ENCODE measurements at regions of chr4 and their contacts with region 1.

Region 1: GRCh38 chr4:168758351-168758876 is 251.6 kb downstream of the CBR4 start:
- H3K4me3 Mint-ChIP-seq: no peak overlapping the region
- H3K27ac Mint-ChIP-seq: peak overlapping the region; percentile 17
- H3K4me1 Mint-ChIP-seq: peaks cover 46% of the 10 kb centered on the region
- H3K27me3 Mint-ChIP-seq: peaks cover 12% of the 10 kb centered on the region

Region 2: DNA sequence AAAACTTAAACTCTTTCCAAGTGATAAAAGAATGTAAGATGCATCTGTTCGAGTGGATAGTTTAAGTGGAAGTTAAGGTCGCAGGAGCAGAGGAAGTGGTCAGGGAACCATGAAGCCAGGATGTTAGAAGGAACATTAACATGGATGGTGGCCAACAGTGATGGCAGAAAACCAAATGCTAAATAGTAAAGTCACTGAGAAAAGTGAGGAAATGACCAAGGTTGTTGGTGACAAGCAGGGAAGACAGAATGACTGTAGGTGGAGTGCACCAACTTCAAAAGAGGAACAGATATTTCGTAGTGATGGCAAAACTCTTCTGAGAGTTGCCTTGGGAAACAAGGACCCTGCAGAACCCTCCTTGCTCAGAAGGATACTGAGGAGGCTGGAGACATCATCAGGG is 35.4 kb before region 1 on chr4:
- intact Hi-C with region 1: loop called (anchors 5 kb)
- H3K4me3 Mint-ChIP-seq: no peak overlapping the region
- H3K27ac Mint-ChIP-seq: peak overlapping the region; percentile 66
- H3K4me1 Mint-ChIP-seq: peaks cover 56% of the 10 kb centered on the region
- H3K27me3 Mint-ChIP-seq: peaks cover 4% of the 10 kb centered on the region

Region 3: DNA sequence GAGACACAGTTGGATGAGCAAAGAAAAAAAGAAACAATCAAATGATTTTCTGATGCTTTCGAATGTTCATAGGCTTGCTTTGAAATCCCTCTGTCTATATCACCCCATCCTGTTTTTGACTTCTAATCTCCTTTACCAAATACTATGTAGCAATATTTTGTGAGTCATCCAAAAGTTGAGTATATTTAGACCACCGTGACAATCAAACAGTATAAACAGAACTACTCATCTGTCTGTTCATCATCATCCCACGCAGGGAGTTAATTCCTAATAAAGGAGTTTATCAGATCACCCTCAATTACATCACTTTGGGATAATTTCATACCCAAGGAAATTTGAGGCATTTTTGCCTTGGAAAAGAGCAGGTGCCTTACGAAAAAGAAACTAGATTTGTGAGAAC is 38.8 kb after region 1 on chr4:
- intact Hi-C with region 1: loop called (anchors 5 kb)
- H3K4me3 Mint-ChIP-seq: no peak overlapping the region
- H3K27ac Mint-ChIP-seq: peak overlapping the region; percentile 43
- H3K4me1 Mint-ChIP-seq: peaks cover 38% of the 10 kb centered on the region
- H3K27me3 Mint-ChIP-seq: no peaks in the 10 kb centered on the region

Region 4: DNA sequence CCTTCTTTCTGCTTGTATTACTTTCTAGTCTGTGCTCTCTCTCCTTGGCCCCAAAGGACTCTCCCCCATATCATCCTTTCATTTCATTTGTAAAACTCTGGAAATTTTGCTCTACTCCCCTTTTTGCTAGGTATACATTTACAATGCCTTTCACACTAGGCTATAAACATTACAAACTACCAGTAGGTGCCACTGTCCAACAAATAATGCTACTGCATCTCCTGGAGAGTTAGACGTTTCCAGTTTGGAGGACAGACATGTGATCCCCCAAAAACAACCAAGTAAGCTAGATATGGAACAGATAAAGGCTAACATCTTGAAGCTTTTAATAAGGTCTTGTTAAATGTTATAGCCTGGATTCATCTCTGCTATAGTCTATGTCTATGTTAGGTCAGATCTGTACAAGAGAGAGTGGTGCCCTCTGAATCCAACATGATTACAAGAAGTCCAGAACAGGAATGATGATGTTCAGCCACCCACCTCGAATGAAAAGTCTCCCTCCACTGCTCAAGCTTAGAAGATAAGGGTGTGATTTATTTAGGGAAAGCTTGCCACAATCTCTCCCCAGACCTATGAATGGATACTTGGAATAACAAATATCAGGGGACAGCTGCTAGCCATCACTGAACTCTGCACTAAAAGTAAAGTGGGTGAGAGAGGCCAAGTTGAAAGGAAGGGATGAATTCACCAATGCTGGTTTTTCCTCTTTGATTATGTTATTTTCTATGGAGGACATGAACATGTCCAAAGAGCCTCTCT is 237.3 kb after region 1 on chr4:
- intact Hi-C with region 1: no loop called
- H3K4me3 Mint-ChIP-seq: no peak overlapping the region
- H3K27ac Mint-ChIP-seq: no peak overlapping the region
- H3K4me1 Mint-ChIP-seq: peaks cover 16% of the 10 kb centered on the region
- H3K27me3 Mint-ChIP-seq: no peaks in the 10 kb centered on the region

Region 5: GRCh38 chr4:169179609-169180521 is 421.5 kb after region 1 on chr4:
- intact Hi-C with region 1: no loop called
- H3K4me3 Mint-ChIP-seq: no peak overlapping the region
- H3K27ac Mint-ChIP-seq: no peak overlapping the region
- H3K4me1 Mint-ChIP-seq: peaks cover 12% of the 10 kb centered on the region
- H3K27me3 Mint-ChIP-seq: no peaks in the 10 kb centered on the region